ENCODE measurements at regions of chr21 and their contacts with region 1.

Region 1: GRCh38 chr21:15552914-15553494 is 176.8 kb upstream of the USP25 start:
- DNase-seq: peak; percentile 42 to 67 (median 66)
- H3K4me3 ChIP-seq: no peak overlapping the region
- H3K27ac ChIP-seq: no peak overlapping the region
- H3K4me1 ChIP-seq: peaks cover 2 to 12% (median 10%) of the 10 kb centered on the region in 4 experiments
- H3K27me3 ChIP-seq: no peaks in the 10 kb centered on the region

Region 2: GRCh38 chr21:14864211-14865021 is 688.6 kb before region 1 on chr21:
- CTCF ChIA-PET with region 1: interaction called, 11 read pairs
- POLR2A ChIA-PET with region 1: no interaction called
- DNase-seq: peak; percentile 57 to 71 (median 71)
- H3K4me3 ChIP-seq: no peak overlapping the region
- H3K27ac ChIP-seq: no peak overlapping the region
- H3K4me1 ChIP-seq: peaks cover 3 to 28% (median 16%) of the 10 kb centered on the region in 4 experiments
- H3K27me3 ChIP-seq: no peaks in the 10 kb centered on the region

Region 3: DNA sequence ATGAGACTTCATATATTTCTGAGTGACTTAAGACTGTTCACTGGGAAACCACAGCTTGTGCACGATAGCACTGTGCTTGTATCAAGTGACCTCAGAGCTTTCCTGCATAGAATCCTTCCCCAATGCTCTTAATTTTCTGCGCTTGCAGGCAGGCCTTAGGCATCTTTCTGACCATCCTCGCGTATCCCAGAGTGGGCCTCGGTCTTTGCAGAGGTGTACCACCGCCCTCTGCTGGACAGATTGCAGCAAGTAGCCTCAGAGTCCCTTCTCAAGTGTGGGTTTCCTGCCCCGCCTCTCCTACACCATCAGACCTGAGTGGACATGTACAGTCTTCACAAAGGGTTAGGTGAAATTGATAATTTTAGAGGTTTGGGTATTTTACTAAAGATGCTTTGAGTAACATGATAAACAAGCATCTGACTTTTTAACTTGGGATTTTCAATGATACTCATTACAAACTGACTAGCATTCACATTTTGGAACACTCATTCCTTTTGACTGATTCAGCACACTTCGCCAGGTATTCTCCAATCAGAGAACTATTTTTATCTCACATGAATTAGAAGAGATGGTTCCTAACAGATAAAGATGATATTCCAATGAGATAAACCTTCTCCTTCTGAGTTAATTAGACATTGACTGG is 69.7 kb before region 1 on chr21:
- CTCF ChIA-PET with region 1: interaction called, 19 read pairs
- POLR2A ChIA-PET with region 1: no interaction called
- DNase-seq: peak; percentile 94 to 96 (median 95)
- H3K4me3 ChIP-seq: peak overlapping the region in 3 of 7 experiments; percentile 16 to 48 (median 20)
- H3K27ac ChIP-seq: peak overlapping the region in 1 of 2 experiments; percentile 57
- H3K4me1 ChIP-seq: peaks cover 16 to 62% (median 24%) of the 10 kb centered on the region in 4 experiments
- H3K27me3 ChIP-seq: no peaks in the 10 kb centered on the region

Region 4: GRCh38 chr21:15520811-15521636 is 32.0 kb before region 1 on chr21:
- CTCF ChIA-PET with region 1: interaction called, 11 read pairs
- POLR2A ChIA-PET with region 1: no interaction called
- DNase-seq: peak in 2 of 3 donors; percentile 41 to 43
- H3K4me3 ChIP-seq: no peak overlapping the region
- H3K27ac ChIP-seq: no peak overlapping the region
- H3K4me1 ChIP-seq: peaks cover 0 to 8% (median 2%) of the 10 kb centered on the region in 4 experiments
- H3K27me3 ChIP-seq: no peaks in the 10 kb centered on the region

Region 5: GRCh38 chr21:15534450-15534886 is 18.5 kb before region 1 on chr21:
- CTCF ChIA-PET with region 1: interaction called, 30 read pairs
- POLR2A ChIA-PET with region 1: no interaction called
- DNase-seq: peak; percentile 67 to 90 (median 84)
- H3K4me3 ChIP-seq: peak overlapping the region in 6 of 7 experiments; percentile 32 to 66 (median 46)
- H3K27ac ChIP-seq: peak overlapping the region; percentile 52 to 60
- H3K4me1 ChIP-seq: peaks cover 4 to 25% (median 9%) of the 10 kb centered on the region in 4 experiments
- H3K27me3 ChIP-seq: no peaks in the 10 kb centered on the region